Right lobe of liver (tissue), 6 donors: ENCODE measurements at regions of chr10 and their contacts with region 1.

Region 1: DNA sequence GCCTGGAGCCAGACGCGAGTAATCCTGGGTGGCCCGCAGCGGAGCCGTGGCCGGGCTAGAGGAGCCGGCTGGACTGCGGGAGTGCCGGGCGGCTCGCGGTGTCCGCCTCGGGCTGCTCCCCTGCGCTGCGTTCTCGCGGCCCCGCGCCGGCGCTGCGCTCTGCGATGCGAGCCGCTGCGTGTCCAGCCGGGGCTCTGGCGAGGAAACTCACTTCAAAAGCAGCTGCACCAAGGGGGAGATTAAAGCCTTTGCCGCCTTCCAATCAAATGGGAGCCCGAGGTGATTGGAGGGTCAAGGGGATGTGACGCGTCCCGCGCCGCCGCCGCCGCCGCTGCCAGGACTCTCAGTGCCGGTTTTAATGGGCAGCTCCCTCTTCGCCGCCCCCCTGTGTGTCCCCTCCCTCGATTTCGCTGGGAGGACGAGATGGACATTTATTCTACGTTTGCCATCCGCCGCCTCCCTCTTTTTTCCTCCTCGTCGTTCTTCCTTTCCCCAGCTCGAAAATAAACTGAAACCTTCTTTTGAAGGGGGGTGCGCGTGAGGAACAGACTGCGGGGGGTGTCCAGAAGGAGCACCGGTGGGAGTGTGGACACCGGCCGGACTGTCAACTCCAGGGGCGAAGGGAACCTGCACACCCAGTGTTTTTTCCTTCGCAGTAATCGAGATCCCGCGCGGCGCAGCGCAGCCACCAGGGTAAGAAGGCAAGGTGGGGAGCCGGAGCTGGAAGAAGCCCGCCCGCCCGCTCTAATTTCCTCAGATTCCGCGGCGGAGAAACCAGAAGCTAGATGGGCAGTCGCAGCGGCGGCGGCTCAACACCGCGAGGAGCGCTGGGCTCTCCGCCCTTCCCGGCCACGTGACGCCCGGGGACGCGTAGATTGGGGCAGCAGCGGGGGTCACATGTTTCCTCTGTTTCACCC is at the start of gene ZNF503:
- DNase-seq: peak; percentile 97 to 98 (median 98)
- ATAC-seq: peak; percentile 72 to 81 (median 76)
- H3K4me3 ChIP-seq: peak within 1 kb of the TSS; percentile 86 to 95 (median 92)
- H3K27ac ChIP-seq: peak within 1 kb of the TSS; percentile 92 to 97 (median 93)
- H3K4me1 ChIP-seq: peaks cover 0 to 6% (median 2%) of the 10 kb centered on the region in 4 donors
- H3K27me3 ChIP-seq: no peaks in the 10 kb centered on the region
- CTCF ChIP-seq: peak in 3 of 4 donors; percentile 5 to 40 (median 7)
- POLR2A ChIP-seq: peak; percentile 96
- total RNA-seq, gene ZNF503: 2.9 to 7.1 (median 5.4) TPM

Region 2: DNA sequence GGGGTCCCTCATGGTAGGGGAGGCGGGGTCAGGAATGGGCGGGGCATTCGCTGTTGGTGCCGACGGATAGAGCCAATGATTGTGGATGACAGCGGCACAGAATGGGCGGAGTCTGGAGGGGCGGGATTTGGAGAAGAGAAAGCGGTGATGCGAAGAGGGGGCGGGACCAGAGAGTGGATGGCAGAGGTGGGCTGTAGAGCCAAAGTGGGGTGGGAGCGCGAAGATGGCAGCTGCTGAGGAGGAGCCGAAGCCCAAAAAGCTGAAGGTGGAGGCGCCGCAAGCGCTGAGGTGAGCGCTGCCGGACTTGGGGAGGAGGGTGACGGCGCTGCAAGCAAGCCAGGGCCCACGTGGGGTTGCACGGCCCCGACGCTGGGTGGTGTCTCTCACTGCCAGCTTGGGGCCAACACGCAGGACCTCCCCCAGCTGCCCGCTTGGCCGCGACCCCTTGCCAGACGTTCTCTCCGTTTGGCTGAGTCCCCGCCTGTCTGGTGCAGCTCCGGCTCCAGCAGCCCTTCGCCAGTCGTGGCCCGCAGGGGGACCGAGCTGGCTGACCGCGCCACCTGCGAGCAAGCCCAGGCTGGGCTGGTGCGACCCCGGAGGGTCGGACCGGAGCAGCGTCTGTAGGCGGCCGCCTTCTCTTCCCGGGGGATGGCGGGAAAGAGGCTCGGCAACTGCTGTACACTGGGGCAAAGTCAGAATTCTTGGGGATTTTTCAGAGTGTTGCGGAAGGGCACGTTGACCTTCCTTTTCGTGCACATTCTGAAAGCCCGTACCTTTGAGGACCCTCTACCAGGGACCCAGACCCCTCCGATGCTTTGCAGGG is 1250.6 kb before region 1 on chr10 and contains the start of gene ADK:
- intact Hi-C with region 1: no loop called
- DNase-seq: peak; percentile 99 to 100 (median 100)
- ATAC-seq: peak; percentile 95 to 97 (median 96)
- H3K4me3 ChIP-seq: peak within 1 kb of the TSS; percentile 83 to 89 (median 88)
- H3K27ac ChIP-seq: peak within 1 kb of the TSS; percentile 82 to 95 (median 86)
- H3K4me1 ChIP-seq: peaks cover 0 to 23% (median 3%) of the 10 kb centered on the region in 4 donors
- H3K27me3 ChIP-seq: no peaks in the 10 kb centered on the region
- CTCF ChIP-seq: peak in 3 of 4 donors; percentile 5 to 29 (median 19)
- POLR2A ChIP-seq: peak; percentile 65
- total RNA-seq, gene ADK: 54.2 to 92.5 (median 63.5) TPM

Region 3: DNA sequence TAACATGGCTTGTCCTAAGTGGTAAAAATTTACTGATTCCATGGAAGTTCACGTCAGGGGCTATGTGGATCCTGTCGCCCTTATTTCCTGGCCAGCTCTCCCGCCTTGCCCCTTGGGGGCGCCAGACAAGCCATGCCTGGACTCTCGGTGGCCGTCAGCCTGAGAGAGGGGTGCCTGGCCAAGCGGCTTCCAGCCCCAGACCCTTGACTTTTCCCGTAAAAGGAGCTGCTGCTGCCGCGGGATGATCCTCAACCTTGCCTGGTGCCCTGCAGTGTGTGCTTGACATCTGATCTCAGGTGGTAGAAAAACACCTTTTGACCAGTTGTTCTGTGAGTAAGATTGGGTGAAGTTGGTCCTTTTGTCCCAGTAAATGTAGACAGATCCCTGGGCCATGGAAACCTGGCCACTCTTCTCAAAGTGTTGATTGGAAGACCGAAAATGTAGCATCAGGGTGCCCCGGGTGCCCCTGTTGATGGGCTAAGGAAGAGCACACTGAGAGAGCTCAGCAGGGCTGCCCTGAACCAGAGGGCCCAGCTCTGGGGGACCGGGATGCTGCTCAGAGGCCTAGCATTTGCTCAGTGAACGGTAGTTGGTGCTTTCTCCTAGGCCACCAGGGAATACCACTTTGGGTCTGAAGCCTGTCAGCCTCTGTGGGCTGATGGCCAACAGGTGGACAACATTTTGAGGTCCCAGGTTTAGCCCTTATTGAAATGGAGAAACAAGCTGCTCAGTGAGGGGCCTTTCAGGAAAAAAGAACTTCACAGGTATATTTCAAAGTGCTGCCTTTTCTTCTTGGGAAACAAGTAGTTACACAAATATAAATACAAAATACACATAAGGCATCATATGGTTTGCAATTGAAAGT is 192.1 kb after region 1 on chr10:
- intact Hi-C with region 1: loop called in 1 of 2 experiments (anchors 10 kb)
- DNase-seq: no peak
- ATAC-seq: peak in 1 of 4 donors; percentile 14
- H3K4me3 ChIP-seq: no peak overlapping the region
- H3K27ac ChIP-seq: peak overlapping the region in 2 of 3 donors; percentile 39 to 63
- H3K4me1 ChIP-seq: peaks cover 0 to 42% (median 6%) of the 10 kb centered on the region in 4 donors
- H3K27me3 ChIP-seq: no peaks in the 10 kb centered on the region
- CTCF ChIP-seq: peak; percentile 7 to 27 (median 21)
- POLR2A ChIP-seq: no peak

Region 4: GRCh38 chr10:75612904-75613684 is 211.3 kb after region 1 on chr10:
- intact Hi-C with region 1: no loop called
- DNase-seq: no peak
- ATAC-seq: peak; percentile 58 to 65 (median 60)
- H3K4me3 ChIP-seq: no peak overlapping the region
- H3K27ac ChIP-seq: no peak overlapping the region
- H3K4me1 ChIP-seq: peaks cover 0 to 26% (median 0%) of the 10 kb centered on the region in 4 donors
- H3K27me3 ChIP-seq: no peaks in the 10 kb centered on the region
- CTCF ChIP-seq: no peak
- POLR2A ChIP-seq: no peak

Region 5: DNA sequence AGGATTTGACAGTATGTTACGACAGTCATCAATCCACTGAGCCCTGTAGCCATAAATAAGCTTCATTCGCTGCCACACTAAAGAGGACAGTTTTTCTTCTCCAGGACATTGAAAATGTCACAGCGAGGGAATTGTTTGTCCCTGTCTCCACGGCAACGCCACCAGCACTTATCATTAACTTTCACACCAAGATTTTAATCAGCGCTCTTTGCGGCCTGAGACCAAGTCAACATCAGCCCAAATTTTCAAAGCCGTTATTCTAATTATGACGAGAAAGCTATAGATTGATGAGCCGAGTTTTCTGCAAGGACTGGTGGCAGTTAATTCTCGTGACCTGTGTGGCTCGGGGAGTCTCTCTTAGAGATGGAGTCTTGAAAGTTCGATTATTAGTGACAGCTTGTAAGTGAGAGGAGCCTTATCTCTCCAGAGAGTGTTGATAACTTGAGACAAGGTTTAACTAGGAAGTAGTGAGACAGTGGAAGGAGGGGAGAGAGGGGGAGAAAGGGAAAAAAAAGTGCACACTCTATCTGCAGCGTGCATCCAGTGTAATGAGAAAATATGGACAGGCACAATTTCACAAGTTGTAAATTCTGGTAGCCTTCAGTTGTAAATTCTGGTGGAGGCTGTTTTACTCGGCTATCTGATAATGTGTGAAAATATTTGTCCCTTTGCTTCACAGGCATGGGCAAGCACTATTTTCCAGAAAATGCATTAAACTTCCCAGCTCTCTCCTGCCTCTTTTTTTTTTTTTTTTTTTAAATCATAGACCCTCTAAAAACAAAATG is 502.9 kb after region 1 on chr10:
- intact Hi-C with region 1: loop called in 1 of 2 experiments (anchors 10 kb)
- DNase-seq: no peak
- ATAC-seq: no peak
- H3K4me3 ChIP-seq: no peak overlapping the region
- H3K27ac ChIP-seq: no peak overlapping the region
- H3K4me1 ChIP-seq: no peaks in the 10 kb centered on the region
- H3K27me3 ChIP-seq: no peaks in the 10 kb centered on the region
- CTCF ChIP-seq: no peak
- POLR2A ChIP-seq: no peak

Region 6: GRCh38 chr10:75910032-75910431 is 508.2 kb after region 1 on chr10:
- intact Hi-C with region 1: loop called (anchors 10 kb)
- DNase-seq: no peak
- ATAC-seq: peak in 3 of 4 donors; percentile 57 to 63 (median 59)
- H3K4me3 ChIP-seq: no peak overlapping the region
- H3K27ac ChIP-seq: no peak overlapping the region
- H3K4me1 ChIP-seq: no peaks in the 10 kb centered on the region
- H3K27me3 ChIP-seq: no peaks in the 10 kb centered on the region
- CTCF ChIP-seq: peak; percentile 61 to 75 (median 70)
- POLR2A ChIP-seq: no peak

Region 7: GRCh38 chr10:76036111-76036940 is 634.5 kb after region 1 on chr10:
- intact Hi-C with region 1: loop called (anchors 5 to 10 kb)
- DNase-seq: peak; percentile 74 to 81 (median 75)
- ATAC-seq: peak; percentile 61 to 79 (median 72)
- H3K4me3 ChIP-seq: no peak overlapping the region
- H3K27ac ChIP-seq: peak overlapping the region in 2 of 3 donors; percentile 37 to 44
- H3K4me1 ChIP-seq: peaks cover 0 to 49% (median 13%) of the 10 kb centered on the region in 4 donors
- H3K27me3 ChIP-seq: no peaks in the 10 kb centered on the region
- CTCF ChIP-seq: peak; percentile 75 to 92 (median 90)
- POLR2A ChIP-seq: no peak

Region 8: GRCh38 chr10:76547352-76547972 is 1145.6 kb after region 1 on chr10:
- intact Hi-C with region 1: loop called in 1 of 2 experiments (anchors 5 kb)
- DNase-seq: peak; percentile 62 to 78 (median 72)
- ATAC-seq: peak; percentile 82 to 91 (median 86)
- H3K4me3 ChIP-seq: no peak overlapping the region
- H3K27ac ChIP-seq: no peak overlapping the region
- H3K4me1 ChIP-seq: peaks cover 0 to 6% (median 0%) of the 10 kb centered on the region in 4 donors
- H3K27me3 ChIP-seq: no peaks in the 10 kb centered on the region
- CTCF ChIP-seq: peak; percentile 80 to 84 (median 82)
- POLR2A ChIP-seq: no peak